HAP-1 (cell line): ENCODE measurements at regions of chr16 and their contacts with region 1.

Region 1: GRCh38 chr16:86072328-86073102 is 173.6 kb downstream of the IRF8 start:
- DNase-seq: peak; percentile 52 to 78
- H3K4me3 ChIP-seq: no peak overlapping the region
- H3K4me1 ChIP-seq: no peaks in the 10 kb centered on the region
- H3K27me3 ChIP-seq: no peaks in the 10 kb centered on the region

Region 2: DNA sequence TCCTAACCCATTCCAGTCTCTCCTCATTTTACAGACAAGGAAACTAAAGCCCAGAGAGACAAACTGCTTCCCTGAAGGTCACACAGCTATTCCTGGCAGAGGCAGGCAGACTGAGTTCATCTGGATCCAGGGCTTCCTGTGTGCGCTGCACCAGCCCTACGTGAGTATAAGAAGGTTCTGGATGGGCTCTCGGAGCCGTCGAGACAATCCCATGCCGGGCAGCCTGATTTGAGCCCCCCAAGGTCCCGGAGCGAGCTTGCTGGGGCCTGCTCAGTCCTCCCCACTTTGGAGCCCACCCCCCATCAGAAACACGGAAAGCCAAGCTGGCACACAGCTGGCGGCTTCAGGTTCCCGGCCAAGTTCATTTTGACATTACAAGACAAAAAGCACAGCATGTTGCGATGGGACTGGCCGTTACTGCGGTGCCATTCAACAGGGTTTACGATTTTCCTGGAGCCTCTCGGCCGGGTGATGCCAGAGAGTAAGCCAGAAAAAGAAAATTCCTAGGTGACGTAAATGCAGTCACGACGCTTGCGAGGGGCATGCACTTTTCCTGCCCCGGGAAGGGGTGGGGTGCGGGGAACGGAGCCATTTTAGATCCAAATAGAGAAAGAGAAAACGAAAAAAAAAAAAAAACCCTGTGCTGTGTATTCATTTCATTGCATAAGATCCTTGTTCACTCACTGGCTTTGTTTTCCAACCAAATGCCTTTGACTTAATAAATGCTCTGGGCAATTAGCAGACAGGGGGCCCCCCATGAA is 270.7 kb after region 1 on chr16:
- in situ Hi-C with region 1: loop called (anchors 5 kb)
- DNase-seq: no peak
- H3K4me3 ChIP-seq: no peak overlapping the region
- H3K4me1 ChIP-seq: no peaks in the 10 kb centered on the region
- H3K27me3 ChIP-seq: peaks cover 8% of the 10 kb centered on the region; the same call in 1 of the 2 replicates